Breast epithelium (tissue), 4 donors: ENCODE measurements at regions of chr7 and their contacts with region 1.

Region 1: DNA sequence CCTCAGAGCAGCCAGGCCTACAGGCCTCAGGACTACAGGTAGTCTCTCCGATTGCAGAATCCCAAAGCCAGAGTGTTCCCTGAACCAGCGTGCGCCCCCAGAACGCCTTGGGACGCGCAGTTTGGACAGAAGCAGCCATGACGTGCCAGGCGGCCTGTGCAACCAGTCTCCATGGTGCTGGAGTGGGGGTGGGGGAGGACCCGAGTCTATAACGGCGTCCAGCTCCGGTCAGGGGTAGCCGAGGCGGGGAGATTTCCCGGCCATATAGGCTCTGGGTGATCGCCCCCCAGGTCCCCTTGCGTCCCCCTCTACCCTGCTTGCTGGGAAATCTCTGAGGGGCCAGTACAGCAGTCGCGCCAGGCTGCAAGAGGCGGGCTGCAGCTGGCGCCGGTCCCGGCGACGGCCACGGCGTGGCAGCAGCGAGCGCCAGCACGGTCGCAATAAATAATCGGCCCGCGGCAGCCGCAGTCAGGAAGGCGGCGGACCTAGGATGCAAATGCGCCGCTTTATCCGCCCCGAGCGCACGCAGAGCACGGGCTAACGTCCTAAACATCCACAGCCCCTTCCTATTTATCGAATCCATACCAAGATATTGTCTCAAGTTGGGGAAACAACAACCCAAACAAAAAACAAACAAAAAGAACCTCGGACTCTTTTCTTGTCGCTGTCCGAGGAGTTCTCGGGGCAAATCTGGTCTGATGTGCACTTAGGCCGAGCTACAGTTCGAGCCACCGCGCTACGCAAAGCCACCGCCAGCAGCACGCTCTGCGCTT is 1.6 kb downstream of the HOXA3 start:
- DNase-seq: peak; percentile 72 to 73
- H3K4me3 ChIP-seq: peak overlapping the region; percentile 68 to 80 (median 75)
- H3K27ac ChIP-seq: peak overlapping the region; percentile 95 to 96
- H3K4me1 ChIP-seq: peaks cover 5 to 9% of the 10 kb centered on the region in 2 donors
- H3K27me3 ChIP-seq: peaks cover 4 to 51% of the 10 kb centered on the region in 2 donors
- CTCF ChIP-seq: peak; percentile 61 to 90 (median 64)
- POLR2A ChIP-seq: peak; percentile 73

Region 2: DNA sequence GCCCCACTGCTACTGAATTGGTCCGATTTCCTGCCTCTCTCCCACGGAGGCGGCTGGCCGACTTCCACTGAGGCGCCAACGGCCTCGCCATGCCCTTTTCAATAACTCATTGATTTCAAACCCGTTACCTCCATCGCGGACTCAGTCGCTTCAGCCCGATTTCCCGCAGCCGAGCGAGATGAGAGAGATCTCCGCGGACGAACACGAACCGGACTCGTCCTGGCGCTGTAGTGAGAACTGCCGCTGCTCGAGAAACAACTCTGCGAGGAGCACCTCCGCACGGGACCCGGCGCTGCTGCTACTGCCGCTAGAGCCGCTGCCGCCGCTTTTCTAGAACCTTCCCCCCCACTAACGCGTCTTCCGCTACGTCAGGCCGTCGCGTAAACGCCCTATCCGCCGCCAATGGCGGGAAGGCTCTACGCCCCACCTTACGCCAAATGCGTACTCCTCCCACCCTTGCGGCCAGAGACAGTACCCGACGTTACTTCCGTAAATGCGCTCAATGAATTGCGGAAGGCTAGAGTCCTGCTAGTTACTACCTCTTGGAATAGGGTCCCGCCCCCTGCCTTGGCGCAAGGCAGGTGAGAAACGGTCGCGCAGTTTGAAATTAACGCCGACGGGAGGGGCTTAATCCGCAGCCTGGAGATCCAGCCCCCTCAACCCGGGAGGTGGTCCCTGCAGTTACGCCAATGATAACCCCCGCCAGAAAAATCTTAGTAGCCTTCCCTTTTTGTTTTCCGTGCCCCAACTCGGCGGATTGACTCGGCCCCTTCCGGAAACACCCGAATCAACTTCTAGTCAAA is 950.1 kb before region 1 on chr7 and contains the start of gene HNRNPA2B1:
- intact Hi-C with region 1: loop called (anchors 10 kb)
- DNase-seq: peak; percentile 97 to 98
- H3K4me3 ChIP-seq: peak within 1 kb of the TSS; percentile 97 to 100 (median 100)
- H3K27ac ChIP-seq: peak within 1 kb of the TSS; percentile 100
- H3K4me1 ChIP-seq: peaks cover 5 to 21% of the 10 kb centered on the region in 2 donors
- H3K27me3 ChIP-seq: no peaks in the 10 kb centered on the region
- CTCF ChIP-seq: peak; percentile 22 to 54 (median 33)
- POLR2A ChIP-seq: peak; percentile 100
- total RNA-seq, gene HNRNPA2B1: 168 to 324 (median 282) TPM

Region 3: GRCh38 chr7:26365077-26365900 is 785.5 kb before region 1 on chr7:
- intact Hi-C with region 1: loop called (anchors 5 kb)
- DNase-seq: peak in 1 of 2 donors; percentile 41
- H3K4me3 ChIP-seq: no peak overlapping the region
- H3K27ac ChIP-seq: no peak overlapping the region
- H3K4me1 ChIP-seq: no peaks in the 10 kb centered on the region
- H3K27me3 ChIP-seq: peaks cover 0 to 7% of the 10 kb centered on the region in 2 donors
- CTCF ChIP-seq: peak; percentile 38 to 88 (median 87)
- POLR2A ChIP-seq: no peak

Region 4: DNA sequence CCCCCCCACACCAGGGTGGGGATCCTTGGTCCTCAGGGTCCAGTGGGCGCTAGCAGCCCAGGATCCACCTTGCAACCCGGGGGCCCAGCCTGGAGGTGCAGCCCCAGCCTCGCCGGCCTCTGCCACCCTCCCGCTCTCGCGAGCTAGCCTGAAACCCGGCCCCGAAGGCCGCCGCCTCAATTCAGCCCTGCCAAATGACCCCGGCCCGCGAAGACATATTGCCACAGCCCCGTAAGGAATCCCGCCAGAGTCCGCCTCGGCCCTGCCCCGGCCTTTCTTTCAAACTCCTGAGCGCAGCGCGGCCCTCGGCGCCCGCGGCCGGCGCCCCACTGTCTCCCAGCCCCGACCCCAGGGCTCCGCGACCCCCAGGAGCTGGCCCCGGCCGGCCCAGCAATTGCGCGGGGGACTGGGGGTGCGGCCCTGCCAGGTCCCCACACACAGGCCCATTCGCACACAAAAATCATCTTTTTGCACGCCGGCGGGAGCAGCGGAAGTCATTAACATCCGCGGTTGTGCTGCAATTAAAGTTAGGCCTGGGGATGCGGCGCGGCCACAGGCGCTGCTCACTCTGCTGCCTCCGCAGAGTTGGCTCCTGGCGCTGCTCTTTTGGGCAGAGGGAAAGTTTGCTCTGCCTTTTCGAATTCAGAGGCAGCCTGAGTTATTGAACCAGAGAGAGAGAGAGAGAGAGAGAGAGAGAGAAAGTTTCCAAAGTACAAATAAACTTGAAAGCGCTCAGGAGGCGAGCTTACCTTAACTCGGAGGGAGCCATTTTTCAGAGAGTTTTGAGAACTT is 11.2 kb before region 1 on chr7:
- intact Hi-C with region 1: no loop called
- DNase-seq: peak in 1 of 2 donors; percentile 19
- H3K4me3 ChIP-seq: peak overlapping the region; percentile 23 to 80 (median 75)
- H3K27ac ChIP-seq: peak overlapping the region; percentile 95 to 96
- H3K4me1 ChIP-seq: peaks cover 4 to 6% of the 10 kb centered on the region in 2 donors
- H3K27me3 ChIP-seq: peaks cover 0 to 6% of the 10 kb centered on the region in 2 donors
- CTCF ChIP-seq: no peak
- POLR2A ChIP-seq: no peak

Region 5: GRCh38 chr7:27677912-27678612 is 527.3 kb after region 1 on chr7:
- intact Hi-C with region 1: loop called (anchors 5 kb)
- DNase-seq: no peak
- H3K4me3 ChIP-seq: no peak overlapping the region
- H3K27ac ChIP-seq: peak overlapping the region; percentile 45 to 71
- H3K4me1 ChIP-seq: no peaks in the 10 kb centered on the region
- H3K27me3 ChIP-seq: no peaks in the 10 kb centered on the region
- CTCF ChIP-seq: no peak
- POLR2A ChIP-seq: no peak